A549 (cell line): ENCODE measurements at regions of chr7 and their contacts with region 1.

Region 1: DNA sequence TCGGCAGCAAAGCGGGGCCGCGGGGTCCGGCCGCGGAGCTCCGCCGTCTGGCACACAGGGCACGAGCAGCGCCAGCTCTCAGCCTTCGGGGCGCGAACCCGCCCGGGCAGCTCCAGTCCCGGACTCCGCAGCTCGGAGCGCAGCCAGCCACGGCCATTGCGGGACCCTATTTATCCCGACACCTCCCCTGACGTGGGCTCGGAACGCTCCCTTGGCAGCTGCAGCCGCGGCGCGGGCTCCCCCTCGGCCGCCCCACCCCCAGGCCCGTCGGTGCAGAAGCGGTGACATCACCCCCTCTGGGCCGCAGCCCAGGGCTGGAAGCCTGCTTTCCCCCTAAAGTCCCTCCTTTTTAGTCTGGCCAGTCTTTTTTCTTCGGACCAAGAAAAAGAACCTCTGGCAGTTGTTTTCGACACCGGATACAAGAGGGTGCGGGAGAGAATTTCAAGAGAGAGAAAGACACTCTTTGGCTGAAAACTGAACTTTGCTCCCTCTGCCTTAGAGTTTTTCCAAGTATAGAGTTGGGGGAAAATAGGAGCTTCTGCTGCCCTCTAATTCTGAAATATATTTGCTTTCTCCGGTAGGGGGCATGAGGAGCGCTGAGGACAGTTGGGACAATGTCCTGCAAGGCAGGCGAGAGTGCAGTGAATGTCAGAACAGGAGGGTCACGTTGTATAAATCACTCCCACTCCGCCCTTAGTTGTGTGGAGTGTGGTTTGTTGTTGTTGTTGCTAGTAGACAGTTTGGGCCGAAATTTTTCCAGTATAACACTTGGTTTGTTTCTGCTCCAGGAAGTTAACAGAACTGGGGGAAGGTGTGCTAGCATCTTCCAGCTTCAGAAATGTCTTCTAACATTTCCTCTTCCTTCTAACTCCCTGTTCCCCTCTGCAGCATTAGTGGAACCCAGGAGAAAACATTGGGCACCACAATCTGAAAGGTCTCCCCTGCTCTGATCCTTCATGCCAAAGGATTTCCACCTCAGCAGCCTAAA is at the start of gene SFRP4:
- DNase-seq: peak; percentile 47 to 84
- ATAC-seq: peak; percentile 66 to 74
- H3K4me3 ChIP-seq: peak within 1 kb of the TSS; percentile 64
- H3K27ac ChIP-seq: peak within 1 kb of the TSS; percentile 81 to 93
- H3K4me1 ChIP-seq: peaks cover 22% of the 10 kb centered on the region
- CTCF ChIP-seq: peak; percentile 73
- EP300 ChIP-seq: no peak
- POLR2A ChIP-seq: peak; percentile 10; the same call in 1 of the 2 replicates
- RAD21 ChIP-seq: peak; percentile 66 to 75
- polyA plus RNA-seq, gene SFRP4: 9.1 and 11.9 TPM in 2 replicates

Region 2: DNA sequence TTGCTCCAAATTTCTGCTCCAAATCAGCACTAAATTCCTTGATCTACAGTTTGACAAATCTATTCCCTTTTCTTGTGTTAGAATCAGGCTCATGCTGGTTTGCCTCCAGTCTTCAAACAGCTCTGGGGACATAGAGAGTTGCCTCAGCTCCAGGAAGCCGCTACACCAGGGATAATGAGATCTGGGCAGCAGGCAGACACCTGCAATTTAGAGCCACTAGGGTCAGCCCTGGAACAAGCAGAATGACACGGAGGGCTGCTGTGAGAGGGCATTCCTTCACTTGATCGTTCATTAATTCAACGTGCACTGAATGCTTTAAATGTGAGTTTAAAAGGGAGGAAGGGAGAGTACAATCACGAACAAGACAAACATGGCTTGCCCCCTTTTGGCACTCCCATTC is 464.6 kb before region 1 on chr7:
- CTCF ChIA-PET with region 1: no interaction called
- POLR2A ChIA-PET with region 1: no interaction called
- DNase-seq: no peak
- ATAC-seq: no peak
- H3K4me3 ChIP-seq: no peak overlapping the region
- H3K27ac ChIP-seq: no peak overlapping the region
- H3K4me1 ChIP-seq: peaks cover 4% of the 10 kb centered on the region; the same call in 1 of the 3 replicates
- CTCF ChIP-seq: no peak
- EP300 ChIP-seq: no peak
- POLR2A ChIP-seq: no peak
- RAD21 ChIP-seq: no peak

Region 3: GRCh38 chr7:37815671-37816371 is 101.1 kb before region 1 on chr7:
- CTCF ChIA-PET with region 1: no interaction called
- POLR2A ChIA-PET with region 1: no interaction called
- DNase-seq: no peak
- ATAC-seq: no peak
- H3K4me3 ChIP-seq: no peak overlapping the region
- H3K27ac ChIP-seq: no peak overlapping the region
- H3K4me1 ChIP-seq: peaks cover 4% of the 10 kb centered on the region; the same call in 1 of the 3 replicates
- CTCF ChIP-seq: no peak
- EP300 ChIP-seq: no peak
- POLR2A ChIP-seq: no peak
- RAD21 ChIP-seq: no peak

Region 4: GRCh38 chr7:37930226-37930948 is 13.4 kb after region 1 on chr7:
- CTCF ChIA-PET with region 1: interaction called, 23 read pairs
- POLR2A ChIA-PET with region 1: interaction called, 5 read pairs
- DNase-seq: peak in 1 of 2 experiments; percentile 29
- ATAC-seq: peak; percentile 86 to 87
- H3K4me3 ChIP-seq: no peak overlapping the region
- H3K27ac ChIP-seq: peak overlapping the region; percentile 47 to 79; a peak in 4 of 6 replicates
- H3K4me1 ChIP-seq: peaks cover 50% of the 10 kb centered on the region
- CTCF ChIP-seq: no peak
- EP300 ChIP-seq: no peak
- POLR2A ChIP-seq: no peak
- RAD21 ChIP-seq: no peak

Region 5: GRCh38 chr7:38107486-38107893 is 190.5 kb after region 1 on chr7:
- CTCF ChIA-PET with region 1: interaction called, 21 read pairs
- POLR2A ChIA-PET with region 1: no interaction called
- DNase-seq: peak; percentile 58 to 61
- ATAC-seq: peak; percentile 95 to 97
- H3K4me3 ChIP-seq: no peak overlapping the region
- H3K27ac ChIP-seq: no peak overlapping the region
- H3K4me1 ChIP-seq: no peaks in the 10 kb centered on the region
- CTCF ChIP-seq: peak; percentile 91
- EP300 ChIP-seq: no peak
- POLR2A ChIP-seq: no peak
- RAD21 ChIP-seq: peak; percentile 84 to 86

Region 6: GRCh38 chr7:38222481-38223096 is 305.6 kb after region 1 on chr7:
- CTCF ChIA-PET with region 1: interaction called, 29 read pairs
- POLR2A ChIA-PET with region 1: no interaction called
- DNase-seq: peak; percentile 48 to 67
- ATAC-seq: peak; percentile 81 to 84; a peak in 5 of 6 replicates
- H3K4me3 ChIP-seq: no peak overlapping the region
- H3K27ac ChIP-seq: no peak overlapping the region
- H3K4me1 ChIP-seq: peaks cover 4% of the 10 kb centered on the region; the same call in 2 of the 3 replicates
- CTCF ChIP-seq: peak; percentile 95
- EP300 ChIP-seq: no peak
- POLR2A ChIP-seq: no peak
- RAD21 ChIP-seq: peak; percentile 89 to 90